Right ventricle myocardium superior (tissue), 1 donor: ENCODE measurements at regions of chr9 and their contacts with region 1.

Region 1: DNA sequence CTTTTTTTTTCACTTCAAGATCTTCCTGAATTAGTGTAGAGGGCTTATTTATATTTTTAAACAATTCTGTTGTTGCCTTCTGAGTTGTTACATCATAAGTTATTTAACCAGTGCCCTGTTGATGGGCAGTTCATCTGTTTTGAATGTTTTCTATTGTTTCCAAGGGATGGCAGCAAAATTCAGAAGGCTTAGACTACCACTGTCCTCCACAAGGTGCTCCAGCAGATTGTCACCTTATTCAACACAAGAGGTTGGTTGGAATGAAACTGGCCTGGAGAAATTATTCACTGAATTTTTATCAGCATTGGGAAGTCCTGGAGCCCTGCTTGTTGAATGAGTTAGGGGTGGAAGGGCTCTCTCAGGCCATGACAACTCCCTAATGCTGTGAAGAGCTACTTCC is 1.3 kb upstream of the KLHL9 start:
- DNase-seq: no peak
- ATAC-seq: no peak

Region 2: GRCh38 chr9:21317956-21318923 is 18.2 kb before region 1 on chr9:
- intact Hi-C with region 1: no loop called
- DNase-seq: no peak
- ATAC-seq: peak; percentile 83

Region 3: DNA sequence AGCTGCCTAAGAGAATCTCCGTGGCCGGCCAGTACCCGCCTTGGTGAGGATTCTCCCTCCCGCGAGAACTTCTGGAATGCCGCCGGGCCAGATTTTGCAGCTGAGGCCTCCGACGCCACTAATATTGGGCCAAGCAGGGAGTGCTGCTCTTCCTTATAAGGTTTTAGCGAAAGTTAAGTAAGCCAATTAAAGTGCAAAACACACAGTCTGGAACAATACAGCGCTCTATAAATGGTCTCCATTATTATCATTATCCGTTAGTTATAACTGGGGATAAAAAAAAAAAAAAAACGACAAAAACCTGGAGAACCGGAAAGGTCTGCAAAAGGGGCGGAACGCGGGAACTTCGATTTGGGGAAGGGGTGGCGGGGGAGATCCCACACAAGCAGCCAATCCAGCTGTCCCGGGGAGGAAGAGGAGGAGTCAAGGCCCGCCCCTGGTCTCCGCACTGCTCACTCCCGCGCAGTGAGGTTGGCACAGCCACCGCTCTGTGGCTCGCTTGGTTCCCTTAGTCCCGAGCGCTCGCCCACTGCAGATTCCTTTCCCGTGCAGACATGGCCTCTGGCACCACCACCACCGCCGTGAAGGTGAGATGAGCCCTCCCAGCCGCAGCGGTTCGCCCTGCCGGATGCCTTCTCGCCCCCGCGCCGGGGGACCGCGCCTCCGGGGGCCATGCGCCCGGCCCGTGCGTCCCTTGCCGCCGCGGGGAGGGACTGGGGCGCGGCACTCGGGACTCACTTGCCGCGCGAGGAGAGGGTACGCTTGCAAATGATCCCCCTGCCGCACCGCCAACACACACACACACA is 465.9 kb after region 1 on chr9 and contains the start of gene MTAP:
- intact Hi-C with region 1: loop called (anchors 2 kb)
- DNase-seq: peak; percentile 95
- ATAC-seq: peak; percentile 99
- total RNA-seq, gene MTAP: 21.2 TPM

Region 4: DNA sequence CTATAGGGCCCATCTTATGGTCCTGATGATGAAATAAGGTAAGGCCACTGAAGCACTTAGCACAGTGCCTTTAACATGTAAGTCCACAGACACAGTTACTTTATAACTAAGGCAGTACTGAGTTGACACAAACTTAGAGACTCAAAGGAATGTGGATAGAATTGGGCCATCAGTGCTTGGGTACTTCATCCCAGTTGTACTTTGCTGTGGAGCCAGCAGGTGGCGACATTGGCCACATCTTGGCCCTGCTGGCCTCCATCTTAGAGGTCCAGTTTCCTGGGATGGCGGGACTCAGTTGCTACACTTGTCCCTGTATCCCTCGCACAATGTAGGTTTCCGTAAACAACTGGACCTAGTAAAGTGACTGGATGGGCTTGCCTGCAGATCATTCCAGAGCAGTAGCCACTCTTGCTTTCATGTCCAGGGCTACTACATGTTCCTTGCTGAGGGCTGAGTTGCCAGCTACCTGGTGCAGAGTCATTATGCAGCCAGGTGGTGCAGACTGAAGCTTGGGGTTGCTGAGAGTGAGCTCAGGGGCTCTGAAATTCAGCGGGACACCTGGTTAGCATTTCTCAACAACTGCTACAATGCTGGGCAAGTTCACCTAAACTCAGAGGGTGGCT is 476.6 kb after region 1 on chr9:
- intact Hi-C with region 1: no loop called
- DNase-seq: peak; percentile 77
- ATAC-seq: peak; percentile 74